Activated CD4-positive, alpha-beta T cell treated with anti-CD3 and anti-CD28 coated beads for 36 hours (primary cell): ENCODE measurements at regions of chr14 and their contacts with region 1.

Region 1: DNA sequence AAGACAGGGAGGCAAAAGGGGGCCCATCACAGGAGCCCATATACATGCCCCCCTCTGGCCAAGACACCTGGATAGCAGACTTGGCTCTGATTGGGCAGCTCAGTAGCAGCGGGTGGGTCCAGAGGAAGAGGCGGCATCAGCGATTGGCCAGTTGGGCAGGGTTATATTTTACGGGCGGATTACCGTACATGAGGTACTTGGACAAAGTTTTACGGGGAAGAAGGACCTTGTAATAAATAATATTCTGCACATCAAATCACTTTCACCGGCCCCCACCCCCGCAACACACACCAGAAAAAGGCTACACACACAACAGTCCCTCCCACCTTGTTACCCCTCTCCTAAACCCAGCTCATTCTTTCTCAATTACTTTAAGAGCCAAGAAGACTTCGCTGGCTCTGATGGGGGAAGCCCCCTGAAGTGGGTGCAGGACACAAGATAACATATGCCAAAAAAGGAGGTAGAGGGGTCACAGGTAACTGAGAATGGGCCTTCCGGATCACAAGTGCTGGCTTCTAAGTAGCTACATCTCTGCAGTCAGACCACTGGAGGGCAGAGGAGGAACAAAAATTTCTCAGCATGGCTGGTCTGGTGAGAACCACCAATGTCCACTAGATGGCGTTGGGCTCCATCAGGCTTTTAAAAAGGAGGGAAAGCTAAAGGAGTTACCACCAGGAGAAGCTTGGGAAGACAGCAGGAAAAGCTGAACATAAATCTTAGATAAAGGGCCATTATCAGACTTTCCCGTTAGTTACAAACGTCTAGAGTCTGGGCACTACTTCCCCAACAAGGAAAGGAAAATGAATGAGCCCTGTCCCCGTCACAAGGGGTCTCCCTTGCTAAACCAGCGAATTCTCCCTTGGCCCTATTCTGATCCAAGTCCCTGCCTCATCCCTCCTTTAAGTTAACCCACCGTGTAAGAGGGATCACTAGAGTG is 11.4 kb upstream of the CDH24 start:
- DNase-seq: peak; percentile 84
- ATAC-seq: peak; percentile 79
- H3K4me3 Mint-ChIP-seq: peak overlapping the region; percentile 5
- H3K27ac Mint-ChIP-seq: peak overlapping the region; percentile 80
- H3K4me1 Mint-ChIP-seq: peaks cover 37% of the 10 kb centered on the region
- H3K27me3 Mint-ChIP-seq: no peaks in the 10 kb centered on the region

Region 2: GRCh38 chr14:22973217-22974032 is 95.3 kb before region 1 on chr14:
- CTCF ChIA-PET with region 1: interaction called, 26 read pairs
- POLR2A ChIA-PET with region 1: interaction called, 6 read pairs
- intact Hi-C with region 1: no loop called
- DNase-seq: peak; percentile 56
- ATAC-seq: peak; percentile 71
- H3K4me3 Mint-ChIP-seq: no peak overlapping the region
- H3K27ac Mint-ChIP-seq: no peak overlapping the region
- H3K4me1 Mint-ChIP-seq: no peaks in the 10 kb centered on the region
- H3K27me3 Mint-ChIP-seq: no peaks in the 10 kb centered on the region

Region 3: GRCh38 chr14:23025151-23025814 is 43.5 kb before region 1 on chr14:
- CTCF ChIA-PET with region 1: interaction called, 11 read pairs
- POLR2A ChIA-PET with region 1: interaction called, 4 read pairs
- intact Hi-C with region 1: no loop called
- DNase-seq: peak; percentile 70
- ATAC-seq: peak; percentile 58
- H3K4me3 Mint-ChIP-seq: peak overlapping the region; percentile 37
- H3K27ac Mint-ChIP-seq: peak overlapping the region; percentile 90
- H3K4me1 Mint-ChIP-seq: peaks cover 72% of the 10 kb centered on the region
- H3K27me3 Mint-ChIP-seq: no peaks in the 10 kb centered on the region

Region 4: DNA sequence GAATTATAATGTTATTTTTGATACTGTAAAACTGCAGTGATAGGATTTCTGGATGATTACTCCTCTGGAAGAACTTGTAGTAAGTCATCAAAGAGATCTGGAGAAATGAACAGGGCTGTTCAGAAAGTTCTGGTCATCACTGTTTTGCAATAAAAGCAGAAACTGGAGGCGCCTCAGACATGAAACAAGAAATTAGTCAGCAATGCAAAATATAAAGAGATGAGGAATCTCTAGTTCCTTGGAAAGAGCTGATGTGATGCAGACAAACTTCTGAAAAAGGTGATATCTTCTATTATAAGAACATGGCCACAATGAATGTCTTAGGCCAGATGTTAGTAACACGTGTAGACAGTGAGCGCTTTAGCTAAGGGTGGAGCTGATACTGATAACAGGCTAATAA is 16.7 kb after region 1 on chr14:
- CTCF ChIA-PET with region 1: interaction called, 24 read pairs
- POLR2A ChIA-PET with region 1: interaction called, 3 read pairs
- intact Hi-C with region 1: no loop called
- DNase-seq: no peak
- ATAC-seq: peak; percentile 90
- H3K4me3 Mint-ChIP-seq: peak overlapping the region; percentile 22
- H3K27ac Mint-ChIP-seq: peak overlapping the region; percentile 86
- H3K4me1 Mint-ChIP-seq: peaks cover 45% of the 10 kb centered on the region
- H3K27me3 Mint-ChIP-seq: no peaks in the 10 kb centered on the region

Region 5: GRCh38 chr14:23120541-23121251 is 52.0 kb after region 1 on chr14:
- CTCF ChIA-PET with region 1: interaction called, 25 read pairs
- POLR2A ChIA-PET with region 1: interaction called, 5 read pairs
- intact Hi-C with region 1: loop called in 1 of 2 experiments (anchors 1 kb)
- DNase-seq: peak; percentile 91
- ATAC-seq: peak; percentile 93
- H3K4me3 Mint-ChIP-seq: no peak overlapping the region
- H3K27ac Mint-ChIP-seq: peak overlapping the region; percentile 68
- H3K4me1 Mint-ChIP-seq: peaks cover 47% of the 10 kb centered on the region
- H3K27me3 Mint-ChIP-seq: no peaks in the 10 kb centered on the region